ENCODE measurements at regions of chr14 and their contacts with region 1.

Region 1: GRCh38 chr14:65164068-65164824 is 61.9 kb upstream of the MAX start:
- DNase-seq: no peak
- ATAC-seq: peak; percentile 33
- H3K4me3 Mint-ChIP-seq: no peak overlapping the region
- H3K27ac Mint-ChIP-seq: peak overlapping the region; percentile 56
- H3K4me1 Mint-ChIP-seq: peaks cover 53% of the 10 kb centered on the region
- H3K27me3 Mint-ChIP-seq: no peaks in the 10 kb centered on the region
- CTCF ChIP-seq: peak; percentile 29

Region 2: GRCh38 chr14:65213316-65213715 is 49.1 kb after region 1 on chr14:
- CTCF ChIA-PET with region 1: interaction called, 15 read pairs
- POLR2A ChIA-PET with region 1: interaction called, 171 read pairs
- intact Hi-C with region 1: no loop called
- DNase-seq: no peak
- ATAC-seq: no peak
- H3K4me3 Mint-ChIP-seq: no peak overlapping the region
- H3K27ac Mint-ChIP-seq: peak overlapping the region; percentile 36
- H3K4me1 Mint-ChIP-seq: peaks cover 52% of the 10 kb centered on the region
- H3K27me3 Mint-ChIP-seq: no peaks in the 10 kb centered on the region
- CTCF ChIP-seq: no peak

Region 3: GRCh38 chr14:65502676-65503124 is 338.5 kb after region 1 on chr14:
- CTCF ChIA-PET with region 1: no interaction called
- POLR2A ChIA-PET with region 1: no interaction called
- intact Hi-C with region 1: loop called (anchors 10 kb)
- DNase-seq: no peak
- ATAC-seq: peak; percentile 34
- H3K4me3 Mint-ChIP-seq: no peak overlapping the region
- H3K27ac Mint-ChIP-seq: peak overlapping the region; percentile 73
- H3K4me1 Mint-ChIP-seq: peaks cover 64% of the 10 kb centered on the region
- H3K27me3 Mint-ChIP-seq: no peaks in the 10 kb centered on the region
- CTCF ChIP-seq: no peak

Region 4: GRCh38 chr14:65731933-65732510 is 567.8 kb after region 1 on chr14:
- CTCF ChIA-PET with region 1: no interaction called
- POLR2A ChIA-PET with region 1: no interaction called
- intact Hi-C with region 1: loop called (anchors 10 kb)
- DNase-seq: no peak
- ATAC-seq: peak; percentile 76
- H3K4me3 Mint-ChIP-seq: no peak overlapping the region
- H3K27ac Mint-ChIP-seq: peak overlapping the region; percentile 64
- H3K4me1 Mint-ChIP-seq: peaks cover 12% of the 10 kb centered on the region
- H3K27me3 Mint-ChIP-seq: no peaks in the 10 kb centered on the region
- CTCF ChIP-seq: no peak

Region 5: DNA sequence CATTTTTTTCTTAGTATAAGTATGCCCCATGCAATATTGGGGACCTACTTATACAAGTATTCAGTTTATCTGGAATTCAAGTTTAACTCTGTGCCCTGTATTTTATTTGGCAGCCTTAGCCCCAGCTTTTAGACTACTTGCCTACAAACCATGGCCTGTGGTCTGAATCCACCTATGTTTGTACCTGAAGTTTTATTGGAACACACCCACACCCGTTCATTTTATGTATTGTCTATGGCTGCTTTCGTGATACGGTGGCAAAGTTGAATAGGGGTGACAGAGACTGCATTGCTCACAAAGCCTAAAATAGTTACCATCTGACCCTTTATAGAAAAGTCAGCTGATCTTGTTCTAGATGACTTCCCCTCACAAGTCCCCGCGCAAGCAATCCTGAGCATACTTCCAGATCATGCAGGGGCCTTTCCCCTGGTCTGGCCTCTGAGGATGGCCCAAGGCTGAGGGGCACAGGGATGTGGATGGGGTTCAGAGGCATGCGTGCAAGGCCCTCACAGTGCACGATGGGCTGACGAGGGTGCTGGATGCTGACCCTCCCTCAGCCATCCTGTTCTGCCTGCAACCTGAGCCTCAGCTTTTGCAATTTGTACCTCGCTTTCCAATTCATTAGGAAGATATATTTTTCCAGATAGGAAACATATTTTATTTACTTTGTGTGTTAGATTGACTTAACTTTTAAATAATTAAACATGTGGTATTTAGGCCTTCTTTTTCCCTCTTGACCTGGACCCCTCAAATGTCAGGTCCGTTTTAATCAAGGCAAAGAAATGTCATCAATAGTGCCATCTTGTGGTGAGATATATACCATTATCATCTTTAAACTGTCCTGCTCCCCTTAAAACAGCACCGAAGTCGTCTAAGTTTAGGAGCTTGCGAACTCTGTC is 794.7 kb after region 1 on chr14:
- CTCF ChIA-PET with region 1: interaction called, 53 read pairs
- POLR2A ChIA-PET with region 1: interaction called, 5 read pairs
- intact Hi-C with region 1: loop called (anchors 1 kb)
- DNase-seq: no peak
- ATAC-seq: peak; percentile 57
- H3K4me3 Mint-ChIP-seq: no peak overlapping the region
- H3K27ac Mint-ChIP-seq: no peak overlapping the region
- H3K4me1 Mint-ChIP-seq: no peaks in the 10 kb centered on the region
- H3K27me3 Mint-ChIP-seq: peaks cover 20% of the 10 kb centered on the region
- CTCF ChIP-seq: no peak

Measured in activated B cell treated with CpG ODN at 0.5 μM for 24 hours (primary cell).